PC-3 (cell line): ENCODE measurements at regions of chr20 and their contacts with region 1.

Region 1: GRCh38 chr20:6282642-6283041 is 159.8 kb upstream of the FERMT1 start:
- DNase-seq: no peak
- ATAC-seq: no peak
- H3K4me3 ChIP-seq: no peak overlapping the region
- H3K27ac ChIP-seq: no peak overlapping the region
- H3K4me1 ChIP-seq: no peaks in the 10 kb centered on the region
- H3K27me3 ChIP-seq: peaks cover 34% of the 10 kb centered on the region
- CTCF ChIP-seq: no peak

Region 2: GRCh38 chr20:6212903-6213302 is 69.7 kb before region 1 on chr20:
- CTCF ChIA-PET with region 1: no interaction called
- POLR2A ChIA-PET with region 1: no interaction called
- intact Hi-C with region 1: no loop called
- DNase-seq: no peak
- ATAC-seq: no peak
- H3K4me3 ChIP-seq: no peak overlapping the region
- H3K27ac ChIP-seq: no peak overlapping the region
- H3K4me1 ChIP-seq: no peaks in the 10 kb centered on the region
- H3K27me3 ChIP-seq: peaks cover 88% of the 10 kb centered on the region
- CTCF ChIP-seq: no peak

Region 3: DNA sequence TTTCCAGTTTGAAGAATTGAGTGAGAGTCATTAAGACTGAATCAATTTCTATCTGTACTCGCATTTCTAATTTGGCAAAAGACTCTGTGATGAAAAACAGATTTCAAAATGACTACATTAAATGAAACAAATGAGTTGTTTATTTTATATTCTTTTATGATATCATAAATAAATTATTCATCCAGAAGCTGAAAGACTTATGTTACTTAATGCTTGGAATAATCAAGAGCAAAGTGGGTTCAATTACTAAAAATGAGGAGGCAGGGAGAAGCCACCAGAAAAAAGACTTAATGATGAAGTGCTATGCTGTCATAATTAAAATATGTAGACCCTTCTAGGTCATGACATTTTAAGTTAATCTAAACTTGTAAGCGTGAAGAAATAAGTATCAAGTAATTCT is 29.2 kb before region 1 on chr20:
- CTCF ChIA-PET with region 1: no interaction called
- POLR2A ChIA-PET with region 1: no interaction called
- intact Hi-C with region 1: no loop called
- DNase-seq: no peak
- ATAC-seq: no peak
- H3K4me3 ChIP-seq: no peak overlapping the region
- H3K27ac ChIP-seq: no peak overlapping the region
- H3K4me1 ChIP-seq: no peaks in the 10 kb centered on the region
- H3K27me3 ChIP-seq: peaks cover 75% of the 10 kb centered on the region
- CTCF ChIP-seq: no peak

Region 4: DNA sequence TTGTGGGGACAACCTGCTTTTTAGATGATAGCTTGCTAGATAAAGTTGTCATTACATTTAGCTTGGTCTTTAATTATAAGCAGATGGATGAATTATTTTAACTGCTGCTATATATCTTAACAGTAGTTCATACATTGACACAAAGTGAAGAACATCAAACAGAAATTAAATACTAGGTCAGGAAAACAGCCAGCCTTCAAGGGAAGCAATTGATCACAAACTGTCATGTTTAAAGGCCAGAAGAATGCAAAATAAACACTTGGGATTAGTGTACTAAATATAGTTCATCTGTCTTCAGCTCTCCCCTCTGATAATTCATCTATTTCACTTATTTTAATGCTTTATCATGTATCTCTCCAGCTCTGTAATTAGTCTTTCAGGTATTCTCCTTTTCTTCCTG is 65.3 kb after region 1 on chr20:
- CTCF ChIA-PET with region 1: no interaction called
- POLR2A ChIA-PET with region 1: no interaction called
- intact Hi-C with region 1: loop called (anchors 10 kb)
- DNase-seq: no peak
- ATAC-seq: no peak
- H3K4me3 ChIP-seq: no peak overlapping the region
- H3K27ac ChIP-seq: no peak overlapping the region
- H3K4me1 ChIP-seq: no peaks in the 10 kb centered on the region
- H3K27me3 ChIP-seq: peaks cover 47% of the 10 kb centered on the region
- CTCF ChIP-seq: no peak